ENCODE measurements at regions of chr18 and their contacts with region 1.

Region 1: GRCh38 chr18:58687871-58688308 is 16.6 kb downstream of the MALT1 start:
- DNase-seq: peak; percentile 32 to 92 (median 55)
- ATAC-seq: peak; percentile 93
- H3K4me3 ChIP-seq: peak overlapping the region; percentile 25
- H3K4me3 Mint-ChIP-seq: peak overlapping the region; percentile 86
- H3K27ac ChIP-seq: peak overlapping the region; percentile 62 to 67
- H3K27ac Mint-ChIP-seq: peak overlapping the region; percentile 89
- H3K4me1 ChIP-seq: peaks cover 72% of the 10 kb centered on the region
- H3K4me1 Mint-ChIP-seq: peaks cover 81% of the 10 kb centered on the region
- H3K27me3 ChIP-seq: no peaks in the 10 kb centered on the region
- H3K27me3 Mint-ChIP-seq: no peaks in the 10 kb centered on the region
- CTCF ChIP-seq: no peak

Region 2: GRCh38 chr18:58615140-58616132 is 72.5 kb before region 1 on chr18:
- CTCF ChIA-PET with region 1: no interaction called
- POLR2A ChIA-PET with region 1: interaction called, 7 read pairs
- intact Hi-C with region 1: loop called in 1 of 2 experiments (anchors 5 kb)
- DNase-seq: peak in 13 of 14 experiments; percentile 17 to 93 (median 37)
- ATAC-seq: peak; percentile 93
- H3K4me3 ChIP-seq: peak overlapping the region; percentile 34
- H3K4me3 Mint-ChIP-seq: peak overlapping the region; percentile 81
- H3K27ac ChIP-seq: peak overlapping the region; percentile 60 to 91
- H3K27ac Mint-ChIP-seq: peak overlapping the region; percentile 94
- H3K4me1 ChIP-seq: peaks cover 46% of the 10 kb centered on the region
- H3K4me1 Mint-ChIP-seq: peaks cover 53% of the 10 kb centered on the region
- H3K27me3 ChIP-seq: no peaks in the 10 kb centered on the region
- H3K27me3 Mint-ChIP-seq: no peaks in the 10 kb centered on the region
- CTCF ChIP-seq: no peak

Region 3: DNA sequence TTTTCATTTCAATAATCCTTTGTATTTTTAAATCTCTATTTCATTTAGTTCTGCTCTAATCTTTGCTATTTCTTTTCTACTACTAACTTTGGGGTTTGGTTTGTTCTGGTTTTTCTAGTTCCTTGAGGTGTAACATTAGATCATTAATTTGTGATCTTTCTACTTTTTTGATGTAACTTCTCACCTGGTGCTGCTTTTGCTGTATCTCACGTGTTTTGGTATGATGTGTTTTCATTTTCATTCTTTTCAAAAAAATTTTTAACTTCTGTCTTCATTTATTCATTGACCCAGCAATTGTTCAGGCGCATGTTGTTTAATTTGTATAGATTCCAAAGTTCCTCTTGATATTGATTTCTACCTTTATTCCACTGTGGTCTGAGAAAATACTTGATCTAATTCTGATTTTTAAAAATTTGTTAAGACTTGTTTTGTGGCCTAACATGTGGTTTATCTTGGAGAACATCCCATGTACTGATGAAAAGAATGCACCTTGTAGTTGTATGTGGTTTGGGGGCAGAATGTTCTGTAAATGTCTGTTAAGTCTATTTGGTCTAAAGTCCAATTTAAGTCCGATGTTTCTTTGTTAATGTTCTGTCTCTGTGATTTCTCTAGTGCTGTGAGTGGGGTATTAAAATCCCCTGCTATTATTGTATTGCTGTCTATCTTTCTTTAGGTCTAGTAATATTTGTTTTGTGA is 33.9 kb before region 1 on chr18:
- CTCF ChIA-PET with region 1: no interaction called
- POLR2A ChIA-PET with region 1: interaction called, 16 read pairs
- intact Hi-C with region 1: loop called in 1 of 2 experiments (anchors 5 kb)
- DNase-seq: no peak
- ATAC-seq: no peak
- H3K4me3 ChIP-seq: no peak overlapping the region
- H3K4me3 Mint-ChIP-seq: peak overlapping the region; percentile 2
- H3K27ac ChIP-seq: no peak overlapping the region
- H3K27ac Mint-ChIP-seq: peak overlapping the region; percentile 31
- H3K4me1 ChIP-seq: peaks cover 47% of the 10 kb centered on the region
- H3K4me1 Mint-ChIP-seq: peaks cover 88% of the 10 kb centered on the region
- H3K27me3 ChIP-seq: no peaks in the 10 kb centered on the region
- H3K27me3 Mint-ChIP-seq: no peaks in the 10 kb centered on the region
- CTCF ChIP-seq: no peak

Region 4: DNA sequence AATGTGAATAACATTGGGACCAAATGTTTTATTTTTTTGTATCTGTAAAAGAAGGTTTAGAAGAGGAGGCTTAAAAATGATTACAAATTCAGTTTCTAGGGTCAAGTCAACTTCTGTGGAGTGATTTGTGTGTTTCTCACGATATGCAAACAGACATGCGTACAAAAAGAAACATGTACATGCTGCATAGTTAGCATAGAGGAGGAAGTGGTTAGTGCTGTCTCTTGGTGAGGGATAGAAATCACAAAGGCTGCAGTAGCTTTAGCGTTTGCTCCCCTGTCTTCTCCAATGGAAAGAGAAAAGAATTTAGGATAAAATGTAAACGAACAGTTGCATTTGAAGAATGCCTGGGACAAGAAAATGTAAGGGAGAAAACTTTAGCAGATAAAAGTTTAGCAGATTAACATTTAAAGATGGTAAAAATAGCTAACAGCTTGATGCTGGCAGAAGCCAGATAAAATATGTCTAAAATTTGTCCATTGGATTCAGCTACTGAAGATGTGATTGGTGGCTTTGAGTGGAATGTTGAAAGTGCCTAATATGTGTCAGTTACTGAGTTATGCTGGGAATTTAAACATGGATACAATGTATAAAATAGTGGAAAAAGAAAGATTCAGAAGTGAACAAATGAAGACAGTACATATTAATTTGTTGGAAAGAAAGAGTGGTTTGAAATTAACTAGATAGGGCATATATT is 28.3 kb after region 1 on chr18:
- CTCF ChIA-PET with region 1: interaction called, 3 read pairs
- POLR2A ChIA-PET with region 1: interaction called, 17 read pairs
- intact Hi-C with region 1: loop called in 1 of 2 experiments (anchors 2 kb)
- DNase-seq: peak in 4 of 14 experiments; percentile 13 to 73 (median 65)
- ATAC-seq: peak; percentile 83
- H3K4me3 ChIP-seq: no peak overlapping the region
- H3K4me3 Mint-ChIP-seq: peak overlapping the region; percentile 74
- H3K27ac ChIP-seq: no peak overlapping the region
- H3K27ac Mint-ChIP-seq: peak overlapping the region; percentile 89
- H3K4me1 ChIP-seq: peaks cover 16% of the 10 kb centered on the region
- H3K4me1 Mint-ChIP-seq: peaks cover 73% of the 10 kb centered on the region
- H3K27me3 ChIP-seq: no peaks in the 10 kb centered on the region
- H3K27me3 Mint-ChIP-seq: no peaks in the 10 kb centered on the region
- CTCF ChIP-seq: no peak

Region 5: GRCh38 chr18:58754544-58755068 is 66.7 kb after region 1 on chr18:
- CTCF ChIA-PET with region 1: no interaction called
- POLR2A ChIA-PET with region 1: interaction called, 4 read pairs
- intact Hi-C with region 1: loop called in 1 of 2 experiments (anchors 2 kb)
- DNase-seq: peak in 2 of 14 experiments; percentile 21 to 22
- ATAC-seq: peak; percentile 37
- H3K4me3 ChIP-seq: no peak overlapping the region
- H3K4me3 Mint-ChIP-seq: no peak overlapping the region
- H3K27ac ChIP-seq: no peak overlapping the region
- H3K27ac Mint-ChIP-seq: peak overlapping the region; percentile 72
- H3K4me1 ChIP-seq: peaks cover 19% of the 10 kb centered on the region
- H3K4me1 Mint-ChIP-seq: peaks cover 50% of the 10 kb centered on the region
- H3K27me3 ChIP-seq: no peaks in the 10 kb centered on the region
- H3K27me3 Mint-ChIP-seq: no peaks in the 10 kb centered on the region
- CTCF ChIP-seq: no peak

Region 6: GRCh38 chr18:58975296-58975695 is 287.4 kb after region 1 on chr18:
- CTCF ChIA-PET with region 1: no interaction called
- POLR2A ChIA-PET with region 1: no interaction called
- intact Hi-C with region 1: no loop called
- DNase-seq: no peak
- ATAC-seq: no peak
- H3K4me3 ChIP-seq: no peak overlapping the region
- H3K4me3 Mint-ChIP-seq: no peak overlapping the region
- H3K27ac ChIP-seq: no peak overlapping the region
- H3K27ac Mint-ChIP-seq: no peak overlapping the region
- H3K4me1 ChIP-seq: no peaks in the 10 kb centered on the region
- H3K4me1 Mint-ChIP-seq: no peaks in the 10 kb centered on the region
- H3K27me3 ChIP-seq: no peaks in the 10 kb centered on the region
- H3K27me3 Mint-ChIP-seq: peaks cover 54% of the 10 kb centered on the region
- CTCF ChIP-seq: no peak